ENCODE measurements at regions of chr19 and their contacts with region 1.

Region 1: GRCh38 chr19:46746281-46747013 is at the start of gene STRN4:
- DNase-seq: peak; percentile 73
- ATAC-seq: peak; percentile 68
- H3K4me3 Mint-ChIP-seq: peak within 1 kb of the TSS; percentile 89
- H3K27ac Mint-ChIP-seq: peak within 1 kb of the TSS; percentile 89
- H3K4me1 Mint-ChIP-seq: peaks cover 49% of the 10 kb centered on the region
- H3K27me3 Mint-ChIP-seq: no peaks in the 10 kb centered on the region
- total RNA-seq, gene STRN4: 56.4 to 56.8 TPM

Region 2: DNA sequence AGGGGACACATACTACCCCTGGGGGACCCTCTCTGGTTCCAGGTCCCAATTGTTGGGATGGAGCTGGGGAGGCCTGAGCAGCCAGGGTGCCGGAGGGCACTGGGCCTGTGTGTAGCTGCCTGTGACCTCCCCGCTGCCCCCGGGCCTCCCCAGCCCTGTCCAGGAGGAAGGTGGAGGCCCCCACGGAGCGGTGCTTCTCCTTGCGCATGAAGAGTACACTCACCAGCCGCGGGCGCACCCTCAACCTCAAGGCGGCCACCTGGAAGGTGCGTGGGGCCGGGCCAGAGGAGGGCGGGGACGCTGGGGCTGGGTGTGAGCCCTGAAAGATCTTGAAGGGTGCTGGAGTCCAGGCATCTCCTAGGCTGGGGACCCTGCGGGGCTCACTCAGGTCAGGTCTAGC is 437.9 kb before region 1 on chr19:
- CTCF ChIA-PET with region 1: no interaction called
- POLR2A ChIA-PET with region 1: no interaction called
- intact Hi-C with region 1: no loop called
- DNase-seq: no peak
- ATAC-seq: no peak
- H3K4me3 Mint-ChIP-seq: no peak overlapping the region
- H3K27ac Mint-ChIP-seq: no peak overlapping the region
- H3K4me1 Mint-ChIP-seq: no peaks in the 10 kb centered on the region
- H3K27me3 Mint-ChIP-seq: no peaks in the 10 kb centered on the region

Region 3: GRCh38 chr19:46529622-46530462 is 216.6 kb before region 1 on chr19:
- CTCF ChIA-PET with region 1: interaction called, 4 read pairs
- POLR2A ChIA-PET with region 1: no interaction called
- intact Hi-C with region 1: loop called (anchors 1 to 10 kb)
- DNase-seq: peak; percentile 86
- ATAC-seq: peak; percentile 75
- H3K4me3 Mint-ChIP-seq: no peak overlapping the region
- H3K27ac Mint-ChIP-seq: peak overlapping the region; percentile 74
- H3K4me1 Mint-ChIP-seq: peaks cover 24% of the 10 kb centered on the region
- H3K27me3 Mint-ChIP-seq: no peaks in the 10 kb centered on the region

Region 4: DNA sequence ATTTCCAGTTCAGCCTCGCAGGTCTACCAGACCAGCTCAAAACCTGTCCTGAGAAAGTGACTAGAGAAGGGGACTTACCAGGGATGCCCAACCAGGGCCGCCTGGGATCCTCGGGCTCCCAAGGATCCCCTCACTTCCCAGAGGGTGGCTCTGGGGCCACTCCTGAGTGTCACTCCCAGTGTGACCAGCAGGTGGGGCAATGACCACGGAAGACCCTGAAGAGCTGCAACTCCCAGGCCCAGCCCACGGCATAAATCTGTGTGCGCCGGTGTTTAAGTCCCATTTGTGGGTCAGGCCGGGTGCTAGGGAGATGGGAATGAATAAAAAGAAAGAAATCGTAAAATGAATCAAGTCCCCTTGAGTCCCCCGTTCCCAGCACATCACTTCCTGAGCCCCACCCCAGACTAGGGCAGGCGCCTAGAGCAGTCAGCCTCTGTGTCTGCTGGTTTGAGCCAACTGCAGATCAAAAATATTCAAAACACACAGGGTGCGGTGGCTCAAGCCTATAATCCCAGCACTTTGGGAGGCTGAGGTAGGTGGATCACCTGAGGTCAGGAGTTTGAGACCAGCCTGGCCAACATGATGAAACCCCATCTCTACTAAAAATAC is 132.2 kb before region 1 on chr19:
- CTCF ChIA-PET with region 1: interaction called, 3 read pairs
- POLR2A ChIA-PET with region 1: no interaction called
- intact Hi-C with region 1: loop called in 1 of 2 experiments (anchors 1 kb)
- DNase-seq: peak; percentile 92
- ATAC-seq: peak; percentile 49
- H3K4me3 Mint-ChIP-seq: no peak overlapping the region
- H3K27ac Mint-ChIP-seq: peak overlapping the region; percentile 62
- H3K4me1 Mint-ChIP-seq: peaks cover 82% of the 10 kb centered on the region
- H3K27me3 Mint-ChIP-seq: no peaks in the 10 kb centered on the region

Region 5: DNA sequence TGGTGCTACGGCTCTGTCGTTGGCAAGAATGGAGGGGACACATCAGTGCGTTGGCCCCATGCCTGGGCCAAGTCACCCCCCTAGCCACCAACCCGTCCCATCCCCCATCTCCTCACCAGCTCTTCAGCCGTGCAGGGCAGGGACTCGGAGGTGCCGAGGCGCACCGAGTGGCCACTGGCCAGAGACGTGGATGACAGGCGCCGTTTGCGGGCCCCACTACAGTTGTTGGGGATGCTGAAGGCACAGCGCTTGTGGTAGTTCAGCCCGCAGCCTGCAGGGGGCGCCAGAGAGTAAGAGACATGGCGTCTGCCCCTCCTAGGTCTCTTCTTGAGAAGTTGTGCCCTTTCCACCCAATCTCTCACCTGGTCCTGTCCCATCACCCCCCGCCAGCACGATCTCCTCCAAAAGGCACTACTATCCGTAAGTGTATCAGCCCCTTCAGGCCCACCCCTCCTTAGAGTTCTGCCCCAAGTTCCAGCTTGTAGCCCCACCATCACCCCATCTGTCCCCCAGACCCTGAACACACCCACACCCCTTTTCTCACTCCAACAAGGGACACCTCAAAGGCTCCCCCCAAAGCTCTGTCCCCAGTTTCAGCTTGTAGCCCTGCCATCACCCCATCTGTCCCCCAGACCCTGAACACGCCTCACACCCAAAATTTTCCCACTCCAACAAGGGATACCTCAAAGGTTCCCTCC is 41.9 kb before region 1 on chr19:
- CTCF ChIA-PET with region 1: interaction called, 8 read pairs
- POLR2A ChIA-PET with region 1: no interaction called
- intact Hi-C with region 1: loop called in 1 of 2 experiments (anchors 1 kb)
- DNase-seq: peak; percentile 93
- ATAC-seq: peak; percentile 90
- H3K4me3 Mint-ChIP-seq: no peak overlapping the region
- H3K27ac Mint-ChIP-seq: peak overlapping the region; percentile 67
- H3K4me1 Mint-ChIP-seq: peaks cover 6% of the 10 kb centered on the region
- H3K27me3 Mint-ChIP-seq: no peaks in the 10 kb centered on the region

Region 6: GRCh38 chr19:46717034-46717723 is 29.3 kb before region 1 on chr19 and contains the start of gene PRKD2:
- CTCF ChIA-PET with region 1: interaction called, 5 read pairs
- POLR2A ChIA-PET with region 1: no interaction called
- intact Hi-C with region 1: loop called (anchors 1 to 5 kb)
- DNase-seq: peak; percentile 95
- ATAC-seq: peak; percentile 66
- H3K4me3 Mint-ChIP-seq: peak within 1 kb of the TSS; percentile 94
- H3K27ac Mint-ChIP-seq: peak within 1 kb of the TSS; percentile 95
- H3K4me1 Mint-ChIP-seq: peaks cover 40% of the 10 kb centered on the region
- H3K27me3 Mint-ChIP-seq: no peaks in the 10 kb centered on the region
- total RNA-seq, gene PRKD2: 76.0 to 78.3 TPM

Region 7: DNA sequence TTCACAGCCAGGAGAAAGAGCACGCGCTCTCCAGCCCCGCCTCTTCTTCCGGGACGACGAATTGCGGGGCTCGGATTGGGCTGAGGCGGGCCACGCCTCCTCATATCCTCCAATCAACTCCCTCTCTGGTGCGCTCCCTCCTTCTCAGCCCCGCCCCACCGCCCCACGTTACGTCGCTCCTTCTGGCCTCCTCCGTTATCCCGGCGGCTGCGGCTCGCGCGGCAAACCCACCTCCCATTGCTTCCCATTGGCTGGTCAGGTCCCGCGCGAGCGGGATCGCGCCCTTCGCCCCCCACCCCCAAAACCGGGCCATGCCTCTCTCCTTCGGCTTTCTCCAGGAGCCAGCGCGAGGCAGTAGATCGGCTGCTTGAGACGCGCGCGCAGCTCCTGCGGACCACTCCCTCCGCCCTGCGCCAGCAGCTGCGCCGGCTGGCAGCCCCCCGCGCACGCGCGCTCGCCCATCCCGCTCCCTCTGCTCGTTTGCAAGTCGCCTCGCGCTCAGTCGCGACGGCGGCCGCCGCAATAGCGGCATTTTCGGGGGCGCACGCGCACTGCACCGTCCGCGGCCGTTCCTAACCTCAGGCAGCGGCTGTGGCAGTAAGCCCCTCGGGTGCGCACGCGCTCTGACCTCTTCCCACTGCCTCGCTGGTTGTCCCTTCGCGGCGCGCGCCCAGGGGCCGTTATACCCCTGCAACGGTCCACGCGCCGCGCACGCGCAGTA is 113.8 kb after region 1 on chr19:
- CTCF ChIA-PET with region 1: no interaction called
- POLR2A ChIA-PET with region 1: no interaction called
- intact Hi-C with region 1: loop called in 1 of 2 experiments (anchors 1 kb)
- DNase-seq: peak; percentile 99
- ATAC-seq: peak; percentile 82
- H3K4me3 Mint-ChIP-seq: no peak overlapping the region
- H3K27ac Mint-ChIP-seq: peak overlapping the region; percentile 78
- H3K4me1 Mint-ChIP-seq: peaks cover 25% of the 10 kb centered on the region
- H3K27me3 Mint-ChIP-seq: no peaks in the 10 kb centered on the region

Region 8: DNA sequence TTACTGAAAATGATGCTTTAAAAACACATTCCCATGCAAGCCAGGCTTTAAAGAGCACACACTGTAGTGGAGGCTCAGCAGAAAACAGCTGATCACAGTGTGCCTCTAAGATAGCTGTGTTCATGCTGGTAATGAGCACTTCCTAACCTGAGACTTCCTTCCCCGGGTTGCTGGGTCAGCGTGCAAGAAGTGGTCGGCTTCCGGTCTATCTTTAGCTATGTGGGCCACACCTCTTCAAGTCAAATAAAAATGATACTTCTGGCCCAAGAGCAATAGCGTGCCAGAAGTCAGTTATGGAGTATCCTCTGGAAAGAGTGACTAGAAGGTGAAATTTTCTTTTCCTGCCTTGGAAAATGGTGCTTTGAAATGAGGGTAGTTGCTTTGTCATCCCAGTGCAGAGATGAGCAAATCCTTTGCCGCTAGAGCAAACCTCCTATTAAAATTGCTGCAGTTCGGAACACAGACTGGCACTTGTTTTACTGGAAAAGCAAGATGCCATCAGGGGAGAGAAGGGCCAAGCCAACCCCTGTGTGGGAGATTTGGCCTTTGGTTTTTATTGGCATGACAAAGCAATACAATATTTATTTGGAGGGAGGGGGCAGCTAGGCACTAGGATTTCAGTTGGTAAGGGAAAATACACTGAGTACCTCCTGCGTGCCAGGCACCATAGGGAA is 178.6 kb after region 1 on chr19:
- CTCF ChIA-PET with region 1: no interaction called
- POLR2A ChIA-PET with region 1: no interaction called
- intact Hi-C with region 1: no loop called
- DNase-seq: peak; percentile 29
- ATAC-seq: peak; percentile 82
- H3K4me3 Mint-ChIP-seq: no peak overlapping the region
- H3K27ac Mint-ChIP-seq: peak overlapping the region; percentile 55
- H3K4me1 Mint-ChIP-seq: peaks cover 41% of the 10 kb centered on the region
- H3K27me3 Mint-ChIP-seq: no peaks in the 10 kb centered on the region

Measured in activated CD4-positive, alpha-beta T cell treated with anti-CD3 and anti-CD28 coated beads for 36 hours (primary cell).